Ascending aorta (tissue), 2 donors: ENCODE measurements at regions of chr19 and their contacts with region 1.

Region 1: GRCh38 chr19:35931161-35931873 is 4.9 kb upstream of the LRFN3 start:
- DNase-seq: peak; percentile 98 to 100
- H3K4me3 ChIP-seq: peak overlapping the region in 1 of 2 donors; percentile 51
- H3K27ac ChIP-seq: peak overlapping the region in 1 of 2 donors; percentile 53
- H3K4me1 ChIP-seq: peaks cover 7 to 9% of the 10 kb centered on the region in 2 donors
- H3K27me3 ChIP-seq: no peaks in the 10 kb centered on the region
- CTCF ChIP-seq: peak; percentile 92 to 99 (median 93)

Region 2: GRCh38 chr19:35124098-35125060 is 806.9 kb before region 1 on chr19:
- intact Hi-C with region 1: loop called (anchors 10 kb)
- DNase-seq: peak; percentile 80 to 96
- H3K4me3 ChIP-seq: peak overlapping the region; percentile 56 to 64
- H3K27ac ChIP-seq: peak overlapping the region; percentile 80 to 85
- H3K4me1 ChIP-seq: peaks cover 8 to 13% of the 10 kb centered on the region in 2 donors
- H3K27me3 ChIP-seq: no peaks in the 10 kb centered on the region
- CTCF ChIP-seq: no peak

Region 3: DNA sequence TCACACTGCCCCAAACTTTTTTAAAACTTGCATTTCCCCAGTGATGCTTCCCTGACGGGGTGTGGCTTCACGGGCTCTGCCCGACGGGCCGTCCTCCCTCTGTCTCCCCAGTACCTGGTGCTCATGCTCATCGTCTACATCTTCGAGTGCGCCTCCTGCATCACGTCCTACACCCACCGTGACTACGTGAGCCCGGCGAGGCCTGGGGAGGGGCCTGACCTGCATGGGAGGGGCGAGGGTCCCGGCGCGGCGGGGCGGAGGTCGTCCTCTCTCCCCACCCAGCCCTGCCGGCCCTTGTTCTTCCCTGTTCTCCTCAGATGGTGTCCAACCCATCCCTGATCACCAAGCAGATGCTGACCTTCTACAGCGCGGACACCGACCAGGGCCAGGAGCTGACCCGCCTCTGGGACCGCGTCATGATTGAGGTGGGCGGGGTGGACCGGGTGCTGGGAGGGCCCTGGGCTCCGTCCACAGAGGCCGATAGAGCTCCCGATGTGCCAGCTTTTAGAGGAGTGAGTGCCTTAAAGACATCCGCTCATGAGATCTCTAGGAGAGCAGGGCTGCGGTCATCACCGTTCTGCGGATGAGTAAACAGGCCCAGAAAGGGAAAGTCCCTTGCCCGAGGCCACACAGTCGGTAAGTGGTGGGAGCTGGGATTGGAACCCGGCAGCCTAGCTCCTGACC is 258.1 kb before region 1 on chr19:
- intact Hi-C with region 1: no loop called
- DNase-seq: peak in 1 of 2 donors; percentile 68
- H3K4me3 ChIP-seq: peak overlapping the region; percentile 23 to 51
- H3K27ac ChIP-seq: no peak overlapping the region
- H3K4me1 ChIP-seq: no peaks in the 10 kb centered on the region
- H3K27me3 ChIP-seq: peaks cover 3% of the 10 kb centered on the region
- CTCF ChIP-seq: no peak

Region 4: DNA sequence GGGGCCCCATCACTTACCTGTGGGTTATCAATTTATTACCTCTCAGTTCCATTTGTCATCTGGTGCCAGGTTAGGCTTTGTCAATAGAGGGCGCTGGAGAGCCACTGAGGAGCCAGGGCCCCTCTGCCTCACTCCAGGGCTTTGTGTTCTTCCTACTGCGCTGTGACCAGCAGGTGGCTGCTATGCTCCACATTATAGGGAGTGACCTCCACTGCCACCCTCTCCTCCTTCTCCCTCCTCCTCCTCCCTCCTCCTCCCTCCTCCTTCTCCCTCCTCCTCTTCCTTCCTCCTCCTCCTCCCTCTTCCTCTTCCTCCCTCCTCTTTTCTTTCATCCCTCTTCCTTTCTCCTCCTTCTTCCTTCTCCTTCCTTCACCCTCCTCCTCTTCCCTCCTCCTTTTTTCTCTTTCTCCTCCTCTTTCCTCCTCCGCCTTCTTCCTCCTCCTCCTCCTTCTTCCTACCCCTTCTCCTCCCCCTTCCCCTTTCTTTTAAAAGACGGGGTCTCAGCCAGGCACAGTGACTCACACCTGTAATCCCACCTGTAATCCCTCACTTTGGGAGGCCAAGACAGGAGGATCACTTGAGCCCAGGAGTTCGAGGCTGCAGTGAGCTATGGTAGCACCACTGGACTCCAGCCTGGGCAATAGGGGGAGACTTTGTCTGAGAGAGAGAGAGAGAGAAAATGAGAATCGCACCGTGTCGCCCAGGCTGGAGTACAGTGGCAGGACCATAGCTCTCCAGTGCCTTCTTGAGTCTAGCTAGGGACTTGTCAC is 237.3 kb before region 1 on chr19:
- intact Hi-C with region 1: loop called (anchors 2 kb)
- DNase-seq: peak; percentile 24 to 92
- H3K4me3 ChIP-seq: no peak overlapping the region
- H3K27ac ChIP-seq: no peak overlapping the region
- H3K4me1 ChIP-seq: no peaks in the 10 kb centered on the region
- H3K27me3 ChIP-seq: no peaks in the 10 kb centered on the region
- CTCF ChIP-seq: peak; percentile 95 to 97 (median 96)

Region 5: DNA sequence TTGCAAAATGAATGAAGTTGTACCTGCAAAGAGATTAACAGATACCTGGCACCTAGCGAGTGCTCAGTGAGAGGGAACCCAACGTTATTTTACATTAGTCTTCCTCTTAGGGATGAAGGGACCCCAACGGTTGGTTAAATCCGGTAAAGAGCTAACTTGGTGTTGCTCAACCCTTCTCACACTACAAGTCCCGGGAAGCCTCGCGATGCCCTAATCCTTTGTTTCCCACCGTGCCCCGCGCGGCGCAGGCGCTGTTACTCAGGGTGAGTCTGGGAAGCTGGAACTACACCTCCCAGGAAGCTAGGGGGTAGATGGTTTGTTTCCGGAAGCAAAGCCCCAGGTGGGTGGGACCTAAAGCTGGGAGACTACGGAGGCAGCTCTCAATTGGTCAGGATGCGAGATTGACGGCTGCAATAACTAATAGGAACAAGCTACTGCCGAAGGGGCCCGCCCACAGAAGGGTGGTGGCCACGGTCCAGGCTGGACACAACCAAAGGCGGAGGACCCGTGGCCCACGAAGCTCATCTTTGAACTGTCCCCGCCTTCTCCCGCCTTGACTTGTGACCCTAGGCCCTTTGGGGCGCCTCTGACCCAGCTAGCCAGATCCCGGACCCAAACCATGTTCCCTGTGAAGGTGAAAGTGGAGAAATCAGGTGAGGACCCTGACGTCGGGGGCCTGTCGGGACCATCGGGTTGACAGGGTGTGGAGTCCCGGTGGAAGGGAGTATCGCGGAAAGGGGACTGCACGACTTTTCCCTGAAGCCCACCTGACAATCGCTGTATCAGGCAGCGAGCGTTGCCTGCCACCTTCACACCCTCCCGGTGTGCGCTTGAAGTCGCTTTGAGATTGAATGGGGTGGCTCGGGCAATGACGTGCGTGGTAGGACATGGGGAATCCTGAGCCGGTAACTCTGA is 183.0 kb before region 1 on chr19 and contains the start of gene LIN37:
- intact Hi-C with region 1: loop called (anchors 1 kb)
- DNase-seq: peak; percentile 99 to 100
- H3K4me3 ChIP-seq: peak within 1 kb of the TSS; percentile 82 to 91
- H3K27ac ChIP-seq: peak within 1 kb of the TSS; percentile 75 to 84
- H3K4me1 ChIP-seq: peaks cover 5 to 26% of the 10 kb centered on the region in 2 donors
- H3K27me3 ChIP-seq: no peaks in the 10 kb centered on the region
- CTCF ChIP-seq: no peak
- total RNA-seq, gene LIN37: 29.9 TPM

Region 6: DNA sequence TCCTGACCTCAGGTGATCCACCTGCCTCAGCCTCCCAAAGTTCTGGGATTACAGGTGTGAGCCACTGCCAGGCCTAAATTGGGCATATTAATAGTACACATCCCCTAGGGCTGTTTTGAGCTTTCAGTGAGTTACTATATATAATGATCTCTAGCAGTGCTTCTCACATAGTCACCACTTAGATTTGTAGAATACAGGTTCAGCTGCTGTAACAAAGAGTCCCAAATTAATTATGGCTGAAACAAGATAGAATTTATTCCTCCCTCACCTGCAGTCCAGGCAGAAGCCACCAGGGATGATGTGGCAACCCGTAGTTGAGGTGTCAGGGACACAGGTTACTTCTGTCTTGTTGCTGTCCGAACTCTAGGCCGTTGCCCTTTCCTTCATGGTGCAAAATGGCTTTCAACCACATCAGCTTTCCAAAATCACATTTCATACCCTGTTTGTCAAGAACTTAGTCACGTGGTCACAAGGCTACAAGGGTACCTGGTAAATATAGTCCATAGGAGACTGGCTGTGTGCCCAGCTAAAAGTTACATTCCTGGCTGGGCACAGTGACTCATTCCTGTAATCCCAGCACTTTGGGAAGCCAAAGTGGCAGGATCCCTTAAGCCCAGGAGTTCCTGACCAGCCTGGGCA is 170.5 kb before region 1 on chr19:
- intact Hi-C with region 1: no loop called
- DNase-seq: no peak
- H3K4me3 ChIP-seq: no peak overlapping the region
- H3K27ac ChIP-seq: no peak overlapping the region
- H3K4me1 ChIP-seq: peaks cover 6 to 12% of the 10 kb centered on the region in 2 donors
- H3K27me3 ChIP-seq: no peaks in the 10 kb centered on the region
- CTCF ChIP-seq: no peak

Region 7: GRCh38 chr19:35775298-35776110 is 155.8 kb before region 1 on chr19 and contains the start of gene ARHGAP33:
- intact Hi-C with region 1: loop called (anchors 1 kb)
- DNase-seq: peak; percentile 96 to 99
- H3K4me3 ChIP-seq: peak within 1 kb of the TSS; percentile 84 to 88
- H3K27ac ChIP-seq: peak within 1 kb of the TSS; percentile 59 to 61
- H3K4me1 ChIP-seq: peaks cover 5 to 14% of the 10 kb centered on the region in 2 donors
- H3K27me3 ChIP-seq: no peaks in the 10 kb centered on the region
- CTCF ChIP-seq: no peak
- total RNA-seq, gene ARHGAP33: 8.7 TPM

Region 8: GRCh38 chr19:35845215-35846037 is 85.9 kb before region 1 on chr19:
- intact Hi-C with region 1: no loop called
- DNase-seq: no peak
- H3K4me3 ChIP-seq: peak overlapping the region; percentile 12 to 29
- H3K27ac ChIP-seq: no peak overlapping the region
- H3K4me1 ChIP-seq: peaks cover 0 to 4% of the 10 kb centered on the region in 2 donors
- H3K27me3 ChIP-seq: peaks cover 23% of the 10 kb centered on the region
- CTCF ChIP-seq: no peak

Region 9: DNA sequence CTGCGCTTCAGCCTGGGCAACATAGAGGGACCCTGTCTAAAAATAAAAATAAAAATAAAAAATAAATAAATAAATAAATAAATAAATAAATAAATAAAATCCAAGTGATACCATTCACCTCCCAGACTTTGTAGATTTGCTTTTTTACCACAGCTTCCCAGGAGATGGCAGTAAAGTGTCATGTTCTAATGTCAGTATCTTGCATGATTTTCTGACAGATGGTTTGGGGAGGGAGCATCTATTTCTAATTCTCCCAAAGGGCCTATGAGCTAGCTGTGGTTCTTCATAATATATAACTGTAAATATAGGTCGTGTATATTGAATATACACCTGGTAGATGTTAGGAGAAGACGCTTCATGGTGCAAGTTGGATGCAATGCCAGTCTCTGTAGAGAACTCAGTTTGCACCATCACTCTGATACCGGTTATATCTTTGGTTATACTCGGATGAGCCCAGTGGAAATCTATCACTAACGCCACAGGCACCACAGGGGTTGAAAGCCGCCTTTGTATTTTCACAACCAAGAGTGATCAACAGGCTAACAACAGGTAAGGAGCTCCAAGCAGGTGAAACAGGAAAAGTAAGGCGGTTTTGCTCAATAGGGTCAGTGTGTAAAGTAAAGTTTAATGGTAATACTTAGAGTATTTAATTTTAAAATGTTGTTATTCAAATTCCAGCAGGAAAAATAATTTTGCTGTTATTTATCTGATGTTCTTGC is 49.0 kb before region 1 on chr19:
- intact Hi-C with region 1: loop called (anchors 1 kb)
- DNase-seq: no peak
- H3K4me3 ChIP-seq: no peak overlapping the region
- H3K27ac ChIP-seq: no peak overlapping the region
- H3K4me1 ChIP-seq: no peaks in the 10 kb centered on the region
- H3K27me3 ChIP-seq: no peaks in the 10 kb centered on the region
- CTCF ChIP-seq: peak; percentile 23 to 53 (median 42)

Region 10: DNA sequence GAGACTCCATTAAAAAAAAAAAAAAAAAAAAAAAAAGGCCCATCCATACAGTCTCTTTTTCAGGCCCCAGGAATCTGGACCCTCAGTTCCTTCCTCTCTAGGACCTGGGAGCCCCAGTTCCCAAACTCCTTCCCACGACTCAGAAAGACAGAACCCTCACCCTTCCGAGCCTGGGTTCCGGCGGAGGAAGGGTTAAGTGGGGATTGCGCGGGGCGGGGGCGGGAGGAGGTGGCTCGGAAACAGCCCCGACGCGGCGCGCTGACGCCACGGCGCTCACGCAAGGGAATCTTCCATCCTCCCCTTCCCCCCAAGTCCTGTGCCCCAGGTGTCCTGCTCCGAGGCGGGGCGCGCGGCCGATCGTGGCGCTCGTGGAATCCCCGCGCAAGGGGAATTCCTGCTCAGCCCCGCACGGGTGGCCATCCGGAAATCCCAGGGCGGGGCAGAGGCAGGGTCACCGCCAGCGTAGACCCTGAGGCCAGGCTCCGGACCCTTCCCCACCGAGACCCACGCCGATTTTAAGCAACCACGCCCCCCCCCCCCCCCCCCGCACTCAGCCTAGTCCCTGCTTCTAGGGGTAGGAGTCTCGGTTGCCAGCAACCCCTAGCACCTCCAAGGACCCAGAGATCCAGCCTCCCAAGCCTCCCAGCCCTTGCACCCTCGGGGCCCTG is 31.6 kb before region 1 on chr19:
- intact Hi-C with region 1: loop called (anchors 1 kb)
- DNase-seq: peak in 1 of 2 donors; percentile 84
- H3K4me3 ChIP-seq: peak overlapping the region; percentile 76 to 84
- H3K27ac ChIP-seq: peak overlapping the region; percentile 74 to 76
- H3K4me1 ChIP-seq: peaks cover 3 to 10% of the 10 kb centered on the region in 2 donors
- H3K27me3 ChIP-seq: no peaks in the 10 kb centered on the region
- CTCF ChIP-seq: no peak

Region 11: DNA sequence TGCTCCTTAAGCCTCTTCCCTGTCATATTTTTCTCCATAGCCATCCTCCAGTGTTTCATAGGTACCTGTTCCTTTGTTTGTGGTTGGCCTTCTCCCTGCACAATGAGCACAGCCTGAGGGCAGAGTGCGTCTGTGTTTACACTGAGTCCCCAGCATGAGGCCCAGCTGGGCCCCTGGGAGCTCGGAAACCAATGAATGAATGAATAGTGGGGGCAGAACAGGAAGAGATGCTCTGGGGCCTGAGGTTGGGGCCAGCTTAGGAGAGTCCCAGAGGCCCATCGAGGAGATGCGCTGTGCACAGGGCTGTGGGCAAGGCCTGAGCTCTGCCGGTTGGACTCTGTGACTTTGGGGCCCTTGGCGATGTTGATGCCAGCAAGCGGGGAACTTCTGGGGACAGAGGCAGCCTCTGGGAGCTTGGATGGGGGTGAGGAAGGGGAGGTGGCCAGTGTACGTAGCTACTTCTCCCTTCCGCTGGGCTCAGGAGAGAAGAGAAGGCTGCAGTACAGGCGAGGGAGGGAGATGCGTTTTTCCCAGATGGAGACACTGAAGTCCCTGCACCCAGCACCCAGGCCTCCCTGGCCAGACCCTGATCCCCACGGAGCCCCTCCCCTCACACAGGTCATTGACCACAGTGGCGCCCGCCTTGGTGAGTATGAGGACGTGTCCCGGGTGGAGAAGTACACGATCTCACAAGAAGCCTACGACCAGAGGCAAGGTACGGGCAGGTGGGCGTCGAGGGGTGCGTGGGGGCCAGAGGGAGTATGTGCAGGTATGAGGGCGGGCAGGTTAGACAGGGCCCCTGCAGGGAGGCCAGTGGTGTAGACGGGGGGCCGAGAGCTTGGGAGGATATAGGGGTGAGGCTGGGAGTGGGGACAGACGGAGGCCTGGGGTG is 189.0 kb after region 1 on chr19:
- intact Hi-C with region 1: no loop called
- DNase-seq: no peak
- H3K4me3 ChIP-seq: no peak overlapping the region
- H3K27ac ChIP-seq: no peak overlapping the region
- H3K4me1 ChIP-seq: peaks cover 6 to 11% of the 10 kb centered on the region in 2 donors
- H3K27me3 ChIP-seq: no peaks in the 10 kb centered on the region
- CTCF ChIP-seq: no peak